Endothelial cell of umbilical vein (primary cell): ENCODE measurements at regions of chr5 and their contacts with region 1.

Region 1: DNA sequence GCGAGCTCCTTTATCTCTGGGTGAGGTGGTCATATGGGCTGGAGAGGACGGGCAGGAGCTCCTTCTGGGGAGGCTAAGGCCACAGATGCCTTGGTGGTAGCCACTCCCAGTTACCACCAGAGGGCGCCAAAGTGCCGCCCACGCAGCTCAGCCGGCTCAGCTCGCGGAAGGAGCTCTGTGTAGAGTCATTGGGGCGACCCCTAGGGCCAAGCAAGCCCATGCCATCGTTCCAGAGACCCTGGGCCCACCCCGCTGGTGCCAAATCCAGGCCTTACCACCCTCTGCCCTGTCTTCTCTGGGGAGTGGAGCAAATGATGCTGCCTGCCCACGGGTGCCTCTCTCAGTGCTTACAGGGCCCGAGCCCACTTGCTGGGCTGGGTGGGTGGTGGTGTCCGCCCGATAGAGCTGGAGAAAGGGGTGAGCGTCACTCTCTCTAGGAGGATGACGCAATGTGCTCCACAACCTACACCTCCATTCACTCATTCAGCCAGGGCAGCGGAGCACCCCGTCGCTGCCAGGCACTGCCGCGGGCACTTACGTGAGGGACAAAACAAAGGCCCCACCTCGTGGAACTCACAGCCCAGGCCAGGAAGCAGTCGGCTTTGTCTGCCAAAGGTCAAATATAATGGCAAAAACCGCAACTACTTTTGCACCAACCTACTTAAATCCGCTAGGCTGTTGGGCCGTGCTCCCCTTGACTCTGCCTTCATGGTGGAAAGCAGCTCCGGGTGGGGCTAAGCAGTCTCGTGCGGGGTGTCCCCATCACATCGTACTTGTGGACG is 13.8 kb downstream of the TSPAN17 start:
- DNase-seq: peak; percentile 69
- H3K4me3 ChIP-seq: no peak overlapping the region
- H3K27ac ChIP-seq: no peak overlapping the region
- H3K4me1 ChIP-seq: no peaks in the 10 kb centered on the region
- H3K27me3 ChIP-seq: peaks cover 0 to 10% of the 10 kb centered on the region in 2 experiments
- CTCF ChIP-seq: peak; percentile 91 to 100
- POLR2A ChIP-seq: no peak

Region 2: GRCh38 chr5:174735498-174736330 is 1925.3 kb before region 1 on chr5:
- CTCF ChIA-PET with region 1: no interaction called
- POLR2A ChIA-PET with region 1: no interaction called
- dilution Hi-C with region 1: no loop called
- intact Hi-C with region 1: no loop called
- DNase-seq: no peak
- H3K4me3 ChIP-seq: no peak overlapping the region
- H3K27ac ChIP-seq: no peak overlapping the region
- H3K4me1 ChIP-seq: no peaks in the 10 kb centered on the region
- H3K27me3 ChIP-seq: peaks cover 20 to 47% of the 10 kb centered on the region in 2 experiments
- CTCF ChIP-seq: no peak
- POLR2A ChIP-seq: no peak

Region 3: DNA sequence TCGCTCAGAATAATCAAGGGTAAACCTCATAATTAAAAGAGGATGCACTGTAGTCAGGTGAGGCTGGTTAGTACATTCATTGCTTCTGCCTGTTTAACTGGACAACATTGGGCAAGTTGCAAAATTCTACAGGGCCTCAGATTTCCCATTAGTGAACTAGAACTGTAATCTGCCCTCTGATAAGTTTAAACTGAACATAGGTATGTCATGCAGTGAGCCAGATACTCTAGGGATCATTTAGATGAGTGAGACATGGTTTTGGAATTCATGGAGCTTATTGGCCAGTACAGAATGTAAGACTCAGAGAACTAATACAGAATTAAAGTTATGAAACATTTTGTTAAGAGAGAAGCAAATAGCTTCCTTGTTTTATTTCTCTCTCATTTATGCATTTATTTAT is 159.7 kb before region 1 on chr5:
- CTCF ChIA-PET with region 1: no interaction called
- POLR2A ChIA-PET with region 1: no interaction called
- dilution Hi-C with region 1: no loop called
- intact Hi-C with region 1: no loop called
- DNase-seq: no peak
- H3K4me3 ChIP-seq: no peak overlapping the region
- H3K27ac ChIP-seq: no peak overlapping the region
- H3K4me1 ChIP-seq: no peaks in the 10 kb centered on the region
- H3K27me3 ChIP-seq: no peaks in the 10 kb centered on the region
- CTCF ChIP-seq: no peak
- POLR2A ChIP-seq: no peak

Region 4: GRCh38 chr5:176530983-176531821 is 129.8 kb before region 1 on chr5:
- CTCF ChIA-PET with region 1: no interaction called
- POLR2A ChIA-PET with region 1: no interaction called
- dilution Hi-C with region 1: no loop called
- intact Hi-C with region 1: no loop called
- DNase-seq: no peak
- H3K4me3 ChIP-seq: no peak overlapping the region
- H3K27ac ChIP-seq: no peak overlapping the region
- H3K4me1 ChIP-seq: peaks cover 28% of the 10 kb centered on the region
- H3K27me3 ChIP-seq: no peaks in the 10 kb centered on the region
- CTCF ChIP-seq: no peak
- POLR2A ChIP-seq: no peak

Region 5: GRCh38 chr5:176573564-176574296 is 87.3 kb before region 1 on chr5:
- CTCF ChIA-PET with region 1: interaction called, 14 read pairs
- POLR2A ChIA-PET with region 1: no interaction called
- dilution Hi-C with region 1: no loop called
- intact Hi-C with region 1: loop called (anchors 1 kb)
- DNase-seq: peak; percentile 45
- H3K4me3 ChIP-seq: no peak overlapping the region
- H3K27ac ChIP-seq: no peak overlapping the region
- H3K4me1 ChIP-seq: no peaks in the 10 kb centered on the region
- H3K27me3 ChIP-seq: no peaks in the 10 kb centered on the region
- CTCF ChIP-seq: peak; percentile 74 to 91
- POLR2A ChIP-seq: no peak

Region 6: DNA sequence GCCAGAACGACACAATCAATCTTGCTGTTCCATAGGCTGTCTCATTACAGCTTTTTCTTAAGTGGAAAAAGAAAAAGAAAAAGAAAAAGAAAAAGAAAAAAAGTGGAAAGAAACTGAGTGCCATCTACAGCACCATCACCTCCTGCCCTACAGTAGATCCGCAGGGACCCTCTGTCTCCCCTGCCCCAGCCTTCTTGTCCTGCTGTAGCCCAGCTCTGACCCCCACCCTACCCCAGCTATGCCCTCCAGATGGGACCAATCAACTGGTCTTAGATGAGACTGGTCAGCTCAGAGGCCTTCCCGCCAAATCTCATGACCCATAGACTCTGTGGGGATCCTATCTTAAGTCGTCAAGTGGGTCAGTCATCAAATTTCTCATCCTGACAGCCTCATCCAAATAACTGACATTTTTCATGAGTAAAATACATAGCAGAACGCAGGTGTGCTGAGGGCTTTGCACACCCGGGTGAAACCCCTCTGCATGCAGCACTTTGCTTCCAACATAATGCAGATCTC is 21.0 kb after region 1 on chr5:
- CTCF ChIA-PET with region 1: interaction called, 13 read pairs
- POLR2A ChIA-PET with region 1: no interaction called
- dilution Hi-C with region 1: no loop called
- intact Hi-C with region 1: no loop called
- DNase-seq: no peak
- H3K4me3 ChIP-seq: no peak overlapping the region
- H3K27ac ChIP-seq: no peak overlapping the region
- H3K4me1 ChIP-seq: no peaks in the 10 kb centered on the region
- H3K27me3 ChIP-seq: peaks cover 17 to 39% of the 10 kb centered on the region in 2 experiments
- CTCF ChIP-seq: no peak
- POLR2A ChIP-seq: no peak

Region 7: GRCh38 chr5:176754376-176754973 is 93.4 kb after region 1 on chr5:
- CTCF ChIA-PET with region 1: no interaction called
- POLR2A ChIA-PET with region 1: no interaction called
- dilution Hi-C with region 1: no loop called
- intact Hi-C with region 1: no loop called
- DNase-seq: no peak
- H3K4me3 ChIP-seq: no peak overlapping the region
- H3K27ac ChIP-seq: no peak overlapping the region
- H3K4me1 ChIP-seq: no peaks in the 10 kb centered on the region
- H3K27me3 ChIP-seq: peaks cover 7 to 21% of the 10 kb centered on the region in 2 experiments
- CTCF ChIP-seq: no peak
- POLR2A ChIP-seq: no peak

Region 8: GRCh38 chr5:176784218-176785165 is 123.4 kb after region 1 on chr5:
- CTCF ChIA-PET with region 1: interaction called, 11 read pairs
- POLR2A ChIA-PET with region 1: no interaction called
- dilution Hi-C with region 1: no loop called
- intact Hi-C with region 1: no loop called
- DNase-seq: peak; percentile 74
- H3K4me3 ChIP-seq: no peak overlapping the region
- H3K27ac ChIP-seq: peak overlapping the region; percentile 48
- H3K4me1 ChIP-seq: peaks cover 15% of the 10 kb centered on the region
- H3K27me3 ChIP-seq: peaks cover 10 to 11% of the 10 kb centered on the region in 2 experiments
- CTCF ChIP-seq: no peak
- POLR2A ChIP-seq: no peak

Region 9: GRCh38 chr5:176887252-176887849 is 226.3 kb after region 1 on chr5:
- CTCF ChIA-PET with region 1: interaction called, 7 read pairs
- POLR2A ChIA-PET with region 1: no interaction called
- dilution Hi-C with region 1: no loop called
- intact Hi-C with region 1: loop called (anchors 10 kb)
- DNase-seq: no peak
- H3K4me3 ChIP-seq: no peak overlapping the region
- H3K27ac ChIP-seq: no peak overlapping the region
- H3K4me1 ChIP-seq: no peaks in the 10 kb centered on the region
- H3K27me3 ChIP-seq: peaks cover 0 to 3% of the 10 kb centered on the region in 2 experiments
- CTCF ChIP-seq: no peak
- POLR2A ChIP-seq: no peak

Region 10: DNA sequence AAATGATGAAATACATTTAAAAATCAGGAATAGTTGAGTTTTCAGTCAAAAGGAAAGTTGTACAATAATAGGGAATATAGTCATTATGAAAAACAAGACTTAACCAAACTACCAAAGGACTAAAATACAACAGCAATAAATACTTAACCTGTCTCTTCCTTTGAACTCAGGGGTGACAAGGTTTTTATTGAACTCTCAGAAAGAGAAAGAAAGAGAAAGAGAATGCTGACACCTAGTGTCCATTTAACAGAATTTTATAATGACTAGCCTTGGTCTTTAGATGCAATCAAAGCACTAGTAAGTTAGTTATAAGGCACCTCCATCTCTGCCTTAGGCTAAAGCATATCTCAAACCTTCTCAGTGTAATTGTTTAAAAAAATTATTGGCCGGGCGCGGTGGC is 298.0 kb after region 1 on chr5:
- CTCF ChIA-PET with region 1: interaction called, 31 read pairs
- POLR2A ChIA-PET with region 1: no interaction called
- dilution Hi-C with region 1: no loop called
- intact Hi-C with region 1: loop called (anchors 2 kb)
- DNase-seq: peak; percentile 47
- H3K4me3 ChIP-seq: no peak overlapping the region
- H3K27ac ChIP-seq: no peak overlapping the region
- H3K4me1 ChIP-seq: peaks cover 8% of the 10 kb centered on the region
- H3K27me3 ChIP-seq: no peaks in the 10 kb centered on the region
- CTCF ChIP-seq: peak; percentile 23 to 26
- POLR2A ChIP-seq: no peak